CD8-positive, alpha-beta T cell (primary cell): ENCODE measurements at regions of chr16 and their contacts with region 1.

Region 1: DNA sequence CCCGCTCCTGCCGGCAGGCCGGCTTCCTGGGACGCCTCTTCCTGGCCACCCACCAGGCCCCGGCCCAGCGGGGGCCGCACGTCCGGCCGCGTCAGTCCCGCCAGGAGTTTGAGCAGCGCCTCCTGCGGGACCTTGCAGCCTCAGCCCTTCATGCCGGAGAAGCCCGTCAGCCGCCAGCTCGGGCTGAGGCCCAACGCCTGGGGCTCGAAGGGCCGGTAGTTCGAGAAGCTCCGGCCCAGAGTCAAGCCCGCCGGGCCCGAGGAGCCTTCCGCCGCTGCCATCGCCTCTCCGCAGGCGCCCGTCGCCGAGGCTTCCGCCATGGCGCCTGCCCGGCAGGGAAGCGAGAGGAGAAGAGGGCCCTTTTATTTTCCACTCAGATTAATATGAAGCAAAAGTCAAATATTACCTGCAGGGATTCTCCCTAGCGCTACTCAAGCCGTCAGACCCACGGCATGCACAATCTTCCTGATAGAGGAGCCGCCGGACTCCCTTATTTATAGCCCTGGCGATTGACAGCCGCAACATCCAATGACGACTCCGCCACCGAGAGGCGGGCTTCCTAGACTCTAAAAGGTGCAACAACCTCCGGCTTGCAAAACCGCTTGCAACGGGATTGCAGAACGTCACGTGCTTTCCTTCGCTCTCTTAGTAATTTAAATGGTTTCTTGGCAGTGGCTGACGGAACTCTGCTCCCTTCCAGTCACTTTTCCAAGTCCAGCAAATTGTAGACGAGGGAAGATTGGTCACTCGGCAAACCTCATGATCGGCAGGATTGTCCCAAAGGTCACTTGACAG is at the start of gene SEPHS2:
- DNase-seq: peak; percentile 93 to 98 (median 94)
- ATAC-seq: peak; percentile 95
- H3K4me3 ChIP-seq: peak within 1 kb of the TSS; percentile 69 to 73
- H3K4me3 Mint-ChIP-seq: peak within 1 kb of the TSS; percentile 92
- H3K27ac ChIP-seq: peak within 1 kb of the TSS; percentile 76 to 80
- H3K27ac Mint-ChIP-seq: peak within 1 kb of the TSS; percentile 95
- H3K4me1 ChIP-seq: peaks cover 32% of the 10 kb centered on the region
- H3K4me1 Mint-ChIP-seq: peaks cover 42% of the 10 kb centered on the region
- H3K27me3 ChIP-seq: no peaks in the 10 kb centered on the region
- H3K27me3 Mint-ChIP-seq: no peaks in the 10 kb centered on the region
- CTCF ChIP-seq: peak; percentile 31
- total RNA-seq, gene SEPHS2: 22.6 to 24.1 TPM

Region 2: DNA sequence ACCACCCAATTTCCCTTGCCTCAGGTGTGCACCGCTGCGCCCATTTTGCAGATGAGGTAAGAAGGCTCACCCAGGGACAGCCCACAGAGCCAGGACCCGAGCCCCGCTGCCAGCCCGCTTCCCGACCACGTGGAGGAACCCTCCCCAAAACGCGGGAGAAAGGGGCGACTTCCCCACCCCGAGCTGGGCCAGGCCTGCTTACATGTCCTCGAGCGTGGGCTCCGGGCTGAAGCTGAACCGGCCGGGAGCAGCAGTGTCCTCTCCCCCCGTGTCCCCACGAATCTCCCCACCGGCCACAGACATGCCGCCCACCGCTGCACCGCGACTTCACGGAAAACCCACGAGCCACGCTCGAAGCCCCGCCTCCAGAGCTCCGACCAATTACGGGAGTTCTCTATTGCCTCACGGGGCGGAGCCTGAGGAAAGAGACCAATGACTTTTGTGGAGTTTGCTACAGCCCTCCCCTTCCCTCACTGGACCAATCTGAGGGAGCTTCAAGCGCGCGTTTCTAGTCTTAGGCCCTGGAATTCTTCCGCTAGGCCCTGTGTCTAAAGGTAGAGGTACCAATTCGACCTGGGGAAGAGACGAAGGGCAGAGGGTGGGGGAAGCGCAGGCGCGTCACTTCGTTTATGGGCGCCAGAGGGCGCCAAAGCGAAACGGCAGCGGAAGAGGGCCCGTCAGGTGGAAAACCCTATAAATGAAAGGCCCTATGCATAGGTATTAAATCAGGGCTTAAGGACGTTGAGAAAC is 15.8 kb before region 1 on chr16 and contains the start of gene DCTPP1:
- CTCF ChIA-PET with region 1: interaction called, 11 read pairs
- POLR2A ChIA-PET with region 1: interaction called, 7 read pairs
- intact Hi-C with region 1: loop called (anchors 1 kb)
- DNase-seq: peak; percentile 89 to 100 (median 95)
- ATAC-seq: peak; percentile 96
- H3K4me3 ChIP-seq: peak within 1 kb of the TSS; percentile 62 to 71
- H3K4me3 Mint-ChIP-seq: no peak within 1 kb of the TSS
- H3K27ac ChIP-seq: peak within 1 kb of the TSS; percentile 60 to 72
- H3K27ac Mint-ChIP-seq: no peak within 1 kb of the TSS
- H3K4me1 ChIP-seq: peaks cover 18% of the 10 kb centered on the region
- H3K4me1 Mint-ChIP-seq: peaks cover 19% of the 10 kb centered on the region
- H3K27me3 ChIP-seq: no peaks in the 10 kb centered on the region
- H3K27me3 Mint-ChIP-seq: no peaks in the 10 kb centered on the region
- CTCF ChIP-seq: peak; percentile 63
- total RNA-seq, gene DCTPP1: 4.0 to 5.5 TPM

Region 3: DNA sequence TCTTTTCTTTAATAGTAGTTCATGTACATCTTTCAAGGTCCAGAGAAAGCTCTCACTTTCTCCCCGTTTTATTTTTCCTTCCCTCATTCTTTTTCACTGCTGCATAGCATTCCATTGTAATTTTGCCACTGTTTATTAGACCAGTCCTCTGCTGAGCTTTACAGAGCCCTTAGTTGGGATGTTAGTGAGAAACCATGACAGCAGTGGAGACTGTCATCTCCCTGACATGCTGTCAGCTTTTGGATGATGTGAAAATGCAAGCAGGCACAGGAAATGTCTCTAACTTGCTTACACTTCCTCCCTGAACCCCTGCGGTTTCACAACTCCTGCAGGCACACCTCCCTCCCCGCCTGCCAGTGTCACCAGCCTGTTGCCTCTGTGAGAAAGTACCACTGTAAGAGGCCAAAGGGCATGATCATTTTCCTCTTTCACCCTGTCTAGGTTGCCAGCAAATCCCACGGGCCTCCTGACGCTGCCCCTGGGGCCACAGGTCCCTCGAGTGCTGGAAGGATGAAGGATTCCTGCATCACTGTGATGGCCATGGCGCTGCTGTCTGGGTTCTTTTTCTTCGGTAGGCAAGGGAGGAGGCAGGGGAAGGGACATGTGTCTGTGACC is 26.8 kb after region 1 on chr16 and contains the start of gene ITGAL:
- CTCF ChIA-PET with region 1: interaction called, 45 read pairs
- POLR2A ChIA-PET with region 1: interaction called, 26 read pairs
- intact Hi-C with region 1: loop called (anchors 1 kb)
- DNase-seq: peak; percentile 67 to 96 (median 85)
- ATAC-seq: peak; percentile 81
- H3K4me3 ChIP-seq: peak within 1 kb of the TSS; percentile 70 to 89
- H3K4me3 Mint-ChIP-seq: peak within 1 kb of the TSS; percentile 95
- H3K27ac ChIP-seq: peak within 1 kb of the TSS; percentile 80 to 83
- H3K27ac Mint-ChIP-seq: peak within 1 kb of the TSS; percentile 93
- H3K4me1 ChIP-seq: peaks cover 71% of the 10 kb centered on the region
- H3K4me1 Mint-ChIP-seq: peaks cover 68% of the 10 kb centered on the region
- H3K27me3 ChIP-seq: no peaks in the 10 kb centered on the region
- H3K27me3 Mint-ChIP-seq: no peaks in the 10 kb centered on the region
- CTCF ChIP-seq: no peak
- total RNA-seq, gene ITGAL: 187 to 218 TPM

Region 4: GRCh38 chr16:30499284-30499683 is 53.7 kb after region 1 on chr16:
- CTCF ChIA-PET with region 1: interaction called, 20 read pairs
- POLR2A ChIA-PET with region 1: interaction called, 4 read pairs
- intact Hi-C with region 1: no loop called
- DNase-seq: no peak
- ATAC-seq: no peak
- H3K4me3 ChIP-seq: no peak overlapping the region
- H3K4me3 Mint-ChIP-seq: no peak overlapping the region
- H3K27ac ChIP-seq: no peak overlapping the region
- H3K27ac Mint-ChIP-seq: peak overlapping the region; percentile 72
- H3K4me1 ChIP-seq: no peaks in the 10 kb centered on the region
- H3K4me1 Mint-ChIP-seq: peaks cover 2% of the 10 kb centered on the region
- H3K27me3 ChIP-seq: no peaks in the 10 kb centered on the region
- H3K27me3 Mint-ChIP-seq: no peaks in the 10 kb centered on the region
- CTCF ChIP-seq: no peak

Region 5: GRCh38 chr16:30526823-30527635 is 81.4 kb after region 1 on chr16:
- CTCF ChIA-PET with region 1: interaction called, 4 read pairs
- POLR2A ChIA-PET with region 1: interaction called, 3 read pairs
- intact Hi-C with region 1: loop called in 1 of 2 experiments (anchors 2 kb)
- DNase-seq: peak; percentile 53 to 92 (median 86)
- ATAC-seq: peak; percentile 75
- H3K4me3 ChIP-seq: peak overlapping the region; percentile 74 to 75
- H3K4me3 Mint-ChIP-seq: peak overlapping the region; percentile 87
- H3K27ac ChIP-seq: peak overlapping the region; percentile 59 to 69
- H3K27ac Mint-ChIP-seq: peak overlapping the region; percentile 90
- H3K4me1 ChIP-seq: peaks cover 12% of the 10 kb centered on the region
- H3K4me1 Mint-ChIP-seq: peaks cover 24% of the 10 kb centered on the region
- H3K27me3 ChIP-seq: no peaks in the 10 kb centered on the region
- H3K27me3 Mint-ChIP-seq: no peaks in the 10 kb centered on the region
- CTCF ChIP-seq: no peak

Region 6: GRCh38 chr16:30585400-30586189 is 140.0 kb after region 1 on chr16 and contains the start of gene ZNF785:
- CTCF ChIA-PET with region 1: no interaction called
- POLR2A ChIA-PET with region 1: no interaction called
- intact Hi-C with region 1: loop called in 1 of 2 experiments (anchors 1 kb)
- DNase-seq: peak; percentile 81 to 98 (median 91)
- ATAC-seq: peak; percentile 99
- H3K4me3 ChIP-seq: peak within 1 kb of the TSS; percentile 68 to 78
- H3K4me3 Mint-ChIP-seq: peak within 1 kb of the TSS; percentile 94
- H3K27ac ChIP-seq: peak within 1 kb of the TSS; percentile 44 to 61
- H3K27ac Mint-ChIP-seq: peak within 1 kb of the TSS; percentile 91
- H3K4me1 ChIP-seq: peaks cover 12% of the 10 kb centered on the region
- H3K4me1 Mint-ChIP-seq: peaks cover 27% of the 10 kb centered on the region
- H3K27me3 ChIP-seq: no peaks in the 10 kb centered on the region
- H3K27me3 Mint-ChIP-seq: no peaks in the 10 kb centered on the region
- CTCF ChIP-seq: no peak
- total RNA-seq, gene ZNF785: 5.0 to 6.9 TPM